ENCODE measurements at regions of chrX and their contacts with region 1.

Region 1: DNA sequence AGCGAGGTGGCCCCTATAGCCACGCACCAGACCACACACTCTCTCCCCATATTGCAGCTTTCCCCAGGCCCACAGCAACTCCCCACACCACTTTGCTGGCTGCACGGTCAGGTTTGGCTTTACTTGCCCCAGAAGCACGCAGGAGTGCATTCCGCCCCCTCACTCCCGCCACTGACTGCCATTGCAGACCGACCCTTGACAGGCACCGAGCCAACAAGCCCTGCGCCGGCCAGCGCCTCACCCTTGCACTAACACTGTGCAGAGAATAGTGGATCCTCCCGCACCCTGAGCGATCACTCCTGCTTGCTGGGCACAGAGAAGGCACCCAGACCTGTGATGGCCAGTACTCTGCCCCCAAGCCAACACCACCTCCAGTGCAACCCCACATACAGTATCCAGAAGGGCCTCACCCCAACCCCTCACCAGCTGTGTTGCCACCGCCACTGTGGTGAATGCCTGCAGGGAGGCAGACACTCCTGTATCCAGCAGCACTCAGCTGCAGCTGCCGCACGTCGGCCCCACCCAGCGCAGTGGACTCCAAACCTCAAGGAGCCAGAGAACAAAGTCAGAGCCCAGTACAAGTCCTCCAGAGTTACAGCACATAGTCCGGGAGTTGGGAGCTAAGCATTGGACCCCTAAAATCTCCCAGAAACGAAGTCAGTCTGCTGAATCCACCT is 28.6 kb upstream of the DIAPH2 start:
- DNase-seq: no peak
- ATAC-seq: no peak
- H3K4me3 ChIP-seq: no peak overlapping the region
- H3K27ac ChIP-seq: no peak overlapping the region
- H3K4me1 ChIP-seq: no peaks in the 10 kb centered on the region
- H3K27me3 ChIP-seq: no peaks in the 10 kb centered on the region
- CTCF ChIP-seq: no peak
- EP300 ChIP-seq: no peak
- POLR2A ChIP-seq: no peak
- RAD21 ChIP-seq: no peak

Region 2: DNA sequence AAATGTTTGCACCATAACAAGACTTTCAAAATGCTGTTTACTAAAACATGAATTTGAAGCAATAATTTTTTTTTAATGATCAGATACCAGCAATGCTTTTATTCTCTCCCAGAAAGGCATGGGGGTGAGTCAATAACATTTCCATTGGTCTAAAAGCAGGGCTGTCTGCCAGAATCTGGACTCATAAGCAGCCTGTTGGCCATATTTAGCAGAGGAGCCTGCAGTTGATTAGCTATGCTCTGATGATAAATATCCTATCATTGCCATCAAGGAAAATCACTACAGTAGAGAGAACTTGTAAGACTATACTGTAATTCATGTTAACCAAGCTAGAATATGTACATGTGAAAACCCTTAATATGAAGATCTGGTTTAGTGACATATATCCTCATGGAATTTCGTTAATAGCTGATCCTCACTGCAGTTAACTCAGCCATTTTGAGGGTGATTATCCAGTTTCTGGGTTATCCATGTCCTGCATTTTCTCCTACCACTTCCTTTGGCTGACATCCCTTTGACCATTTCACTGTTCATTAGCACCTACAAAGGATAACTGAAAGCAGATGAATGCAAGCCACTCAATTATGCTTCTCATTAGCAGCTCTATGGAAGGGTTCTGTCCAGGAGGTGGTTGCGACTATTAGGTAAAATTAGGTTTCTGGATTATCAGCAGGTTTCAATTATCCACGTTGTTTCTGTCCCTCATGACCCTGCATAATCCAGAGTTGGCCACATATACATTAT is 44.3 kb before region 1 on chrX:
- CTCF ChIA-PET with region 1: no interaction called
- POLR2A ChIA-PET with region 1: no interaction called
- in situ Hi-C with region 1: no loop called
- intact Hi-C with region 1: loop called (anchors 2 kb)
- DNase-seq: no peak
- ATAC-seq: no peak
- H3K4me3 ChIP-seq: no peak overlapping the region
- H3K27ac ChIP-seq: no peak overlapping the region
- H3K4me1 ChIP-seq: no peaks in the 10 kb centered on the region
- H3K27me3 ChIP-seq: no peaks in the 10 kb centered on the region
- CTCF ChIP-seq: no peak
- EP300 ChIP-seq: no peak
- POLR2A ChIP-seq: no peak
- RAD21 ChIP-seq: no peak

Region 3: DNA sequence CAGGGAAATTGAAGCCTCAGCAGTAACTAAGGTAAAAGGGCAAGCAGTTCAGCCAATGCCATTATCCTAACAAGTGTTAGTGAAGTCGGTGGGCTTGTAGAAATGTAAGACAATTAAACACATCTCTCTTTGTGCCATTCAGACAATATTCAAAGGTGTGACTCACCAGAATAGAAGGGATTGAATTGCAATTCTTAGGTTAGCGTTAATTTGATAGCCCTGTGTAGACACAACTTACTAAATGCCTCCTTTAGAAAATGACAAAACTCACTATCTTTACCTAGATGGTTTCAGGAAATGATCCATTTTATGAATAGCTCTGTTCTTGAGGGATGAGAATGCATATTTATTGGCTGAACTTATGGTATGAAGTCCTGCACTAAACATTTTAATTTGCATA is 262.8 kb after region 1 on chrX:
- CTCF ChIA-PET with region 1: no interaction called
- POLR2A ChIA-PET with region 1: no interaction called
- in situ Hi-C with region 1: no loop called
- intact Hi-C with region 1: no loop called
- DNase-seq: no peak
- ATAC-seq: no peak
- H3K4me3 ChIP-seq: no peak overlapping the region
- H3K27ac ChIP-seq: no peak overlapping the region
- H3K4me1 ChIP-seq: no peaks in the 10 kb centered on the region
- H3K27me3 ChIP-seq: no peaks in the 10 kb centered on the region
- CTCF ChIP-seq: no peak
- EP300 ChIP-seq: no peak
- POLR2A ChIP-seq: no peak
- RAD21 ChIP-seq: no peak

Measured in HepG2 (cell line).